H1 (cell line): ENCODE measurements at regions of chr4 and their contacts with region 1.

Region 1: GRCh38 chr4:26081795-26082498 is 167.9 kb downstream of the SMIM20 start:
- DNase-seq: no peak
- H3K4me3 ChIP-seq: no peak overlapping the region
- H3K27ac ChIP-seq: no peak overlapping the region
- H3K4me1 ChIP-seq: peaks cover 0 to 4% (median 0%) of the 10 kb centered on the region in 4 experiments; a peak in 2 of 7 replicates
- H3K27me3 ChIP-seq: no peaks in the 10 kb centered on the region
- CTCF ChIP-seq: peak in 2 of 3 experiments; percentile 39 to 67; a peak in 2 of 4 replicates
- EP300 ChIP-seq: no peak
- POLR2A ChIP-seq: no peak
- RAD21 ChIP-seq: peak; percentile 68 to 70

Region 2: GRCh38 chr4:25993395-25994185 is 88.4 kb before region 1 on chr4:
- CTCF ChIA-PET with region 1: interaction called, 10 read pairs
- POLR2A ChIA-PET with region 1: no interaction called
- DNase-seq: peak; percentile 93 to 97
- H3K4me3 ChIP-seq: peak overlapping the region in 2 of 4 experiments; percentile 1 to 45; a peak in 3 of 8 replicates
- H3K27ac ChIP-seq: peak overlapping the region; percentile 46; the same call in 1 of the 2 replicates
- H3K4me1 ChIP-seq: peaks cover 0 to 5% (median 3%) of the 10 kb centered on the region in 4 experiments; a peak in 3 of 7 replicates
- H3K27me3 ChIP-seq: no peaks in the 10 kb centered on the region
- CTCF ChIP-seq: peak; percentile 70 to 83 (median 78)
- EP300 ChIP-seq: peak in 1 of 2 experiments; percentile 22; a peak in 1 of 3 replicates
- POLR2A ChIP-seq: peak in 1 of 2 experiments; percentile 10; a peak in 1 of 3 replicates
- RAD21 ChIP-seq: peak; percentile 61 to 70

Region 3: GRCh38 chr4:26044524-26044923 is 37.4 kb before region 1 on chr4:
- CTCF ChIA-PET with region 1: no interaction called
- POLR2A ChIA-PET with region 1: no interaction called
- DNase-seq: no peak
- H3K4me3 ChIP-seq: no peak overlapping the region
- H3K27ac ChIP-seq: no peak overlapping the region
- H3K4me1 ChIP-seq: peaks cover 0 to 5% (median 0%) of the 10 kb centered on the region in 4 experiments; a peak in 2 of 7 replicates
- H3K27me3 ChIP-seq: no peaks in the 10 kb centered on the region
- CTCF ChIP-seq: no peak
- EP300 ChIP-seq: no peak
- POLR2A ChIP-seq: no peak
- RAD21 ChIP-seq: no peak

Region 4: GRCh38 chr4:26069218-26069617 is 12.7 kb before region 1 on chr4:
- CTCF ChIA-PET with region 1: interaction called, 54 read pairs
- POLR2A ChIA-PET with region 1: no interaction called
- DNase-seq: peak in 1 of 2 experiments; percentile 52
- H3K4me3 ChIP-seq: no peak overlapping the region
- H3K27ac ChIP-seq: no peak overlapping the region
- H3K4me1 ChIP-seq: no peaks in the 10 kb centered on the region
- H3K27me3 ChIP-seq: no peaks in the 10 kb centered on the region
- CTCF ChIP-seq: peak; percentile 39 to 79 (median 73)
- EP300 ChIP-seq: no peak
- POLR2A ChIP-seq: no peak
- RAD21 ChIP-seq: peak; percentile 73 to 84

Region 5: DNA sequence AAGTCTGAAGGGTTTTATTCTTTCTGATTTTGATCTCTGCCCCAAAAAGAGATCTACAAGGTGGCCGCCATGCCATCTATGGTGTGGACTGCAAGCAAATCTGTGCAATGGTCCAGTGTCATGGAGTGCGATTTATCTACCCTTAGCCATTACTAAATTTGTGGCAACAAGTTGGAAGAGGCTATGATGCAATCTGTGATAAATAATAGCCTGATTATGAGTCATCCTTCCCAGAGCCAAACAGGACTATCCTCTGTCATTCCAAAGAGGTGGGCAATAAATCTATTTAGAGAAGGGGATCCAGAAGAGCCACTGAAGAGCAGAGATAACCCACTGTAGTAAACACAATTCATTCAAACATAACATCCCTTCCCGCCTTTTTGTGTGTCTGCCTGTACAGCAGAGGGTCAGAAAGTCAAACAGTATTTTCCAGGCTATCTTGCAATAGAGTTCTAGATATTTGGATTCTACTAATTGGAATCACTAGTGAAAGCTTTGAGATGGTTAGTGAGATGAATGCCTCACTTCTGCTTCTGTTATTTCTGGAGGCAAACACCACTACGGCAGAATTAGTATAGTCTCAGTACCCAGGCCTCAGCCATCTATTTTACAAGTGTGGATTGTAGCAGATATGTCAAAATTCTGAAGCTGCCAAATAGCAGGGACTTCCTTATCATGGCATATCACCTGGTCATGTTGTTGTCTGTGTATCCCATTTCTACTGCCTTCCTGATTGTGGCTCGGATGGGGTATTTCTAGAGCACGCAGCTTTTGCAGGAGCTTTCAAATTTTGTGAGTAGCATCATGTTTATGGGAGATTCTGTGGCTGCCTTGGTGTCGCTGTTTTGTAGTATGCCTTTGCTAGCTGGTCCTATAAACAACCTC is 24.1 kb after region 1 on chr4:
- CTCF ChIA-PET with region 1: interaction called, 25 read pairs
- POLR2A ChIA-PET with region 1: no interaction called
- DNase-seq: no peak
- H3K4me3 ChIP-seq: no peak overlapping the region
- H3K27ac ChIP-seq: no peak overlapping the region
- H3K4me1 ChIP-seq: no peaks in the 10 kb centered on the region
- H3K27me3 ChIP-seq: no peaks in the 10 kb centered on the region
- CTCF ChIP-seq: no peak
- EP300 ChIP-seq: no peak
- POLR2A ChIP-seq: no peak
- RAD21 ChIP-seq: no peak

Region 6: GRCh38 chr4:26410385-26411293 is 328.7 kb after region 1 on chr4:
- CTCF ChIA-PET with region 1: interaction called, 15 read pairs
- POLR2A ChIA-PET with region 1: no interaction called
- DNase-seq: no peak
- H3K4me3 ChIP-seq: no peak overlapping the region
- H3K27ac ChIP-seq: no peak overlapping the region
- H3K4me1 ChIP-seq: peaks cover 0 to 8% (median 3%) of the 10 kb centered on the region in 4 experiments; a peak in 4 of 7 replicates
- H3K27me3 ChIP-seq: no peaks in the 10 kb centered on the region
- CTCF ChIP-seq: peak in 2 of 3 experiments; percentile 35 to 55; a peak in 2 of 4 replicates
- EP300 ChIP-seq: no peak
- POLR2A ChIP-seq: no peak
- RAD21 ChIP-seq: peak; percentile 70 to 71